OCI-LY7 (cell line): ENCODE measurements at regions of chr6 and their contacts with region 1.

Region 1: DNA sequence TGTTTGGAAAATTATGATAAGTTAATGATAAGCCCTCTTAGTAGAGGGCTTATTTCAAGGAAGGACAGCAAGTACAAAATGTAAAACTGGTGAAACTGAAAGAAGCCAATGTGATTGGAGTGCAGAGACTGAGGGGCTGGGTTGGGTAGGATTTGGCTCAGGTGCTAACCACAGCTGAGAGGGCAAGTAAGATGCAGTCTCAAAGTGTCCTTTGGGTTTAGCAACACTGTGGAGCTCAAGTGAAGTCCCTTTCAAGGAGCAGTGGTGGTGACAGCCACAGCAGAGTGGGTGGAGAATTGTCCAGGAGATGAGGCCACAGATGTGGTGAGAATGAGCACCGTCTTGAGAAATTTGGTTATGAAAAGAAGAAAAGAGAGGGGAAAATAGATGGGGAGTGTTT is 181.4 kb downstream of the AKAP7 start:
- DNase-seq: no peak
- H3K4me3 ChIP-seq: no peak overlapping the region
- H3K27ac ChIP-seq: no peak overlapping the region
- H3K4me1 ChIP-seq: no peaks in the 10 kb centered on the region
- CTCF ChIP-seq: no peak

Region 2: GRCh38 chr6:131292145-131292938 is 24.3 kb before region 1 on chr6:
- CTCF ChIA-PET with region 1: no interaction called
- POLR2A ChIA-PET with region 1: interaction called, 10 read pairs
- intact Hi-C with region 1: no loop called
- DNase-seq: no peak
- H3K4me3 ChIP-seq: no peak overlapping the region
- H3K27ac ChIP-seq: no peak overlapping the region
- H3K4me1 ChIP-seq: peaks cover 9% of the 10 kb centered on the region
- CTCF ChIP-seq: no peak